ENCODE measurements at regions of chr16 and their contacts with region 1.

Region 1: GRCh38 chr16:31128711-31129567 is 6.6 kb downstream of the PRSS8 start:
- DNase-seq: peak in 6 of 35 experiments; percentile 16 to 59 (median 28)
- ATAC-seq: peak in 2 of 4 experiments; percentile 12 to 35
- H3K4me3 ChIP-seq: no peak overlapping the region
- H3K4me3 Mint-ChIP-seq: no peak overlapping the region
- H3K27ac ChIP-seq: no peak overlapping the region
- H3K27ac Mint-ChIP-seq: peak overlapping the region in 1 of 2 donors; percentile 49
- H3K4me1 ChIP-seq: peaks cover 0 to 3% of the 10 kb centered on the region in 2 experiments
- H3K4me1 Mint-ChIP-seq: peaks cover 2 to 9% (median 7%) of the 10 kb centered on the region in 3 donors
- H3K27me3 ChIP-seq: no peaks in the 10 kb centered on the region
- H3K27me3 Mint-ChIP-seq: no peaks in the 10 kb centered on the region

Region 2: GRCh38 chr16:29825145-29826044 is 1303.5 kb before region 1 on chr16:
- CTCF ChIA-PET with region 1: no interaction called
- POLR2A ChIA-PET with region 1: interaction called in 1 of 2 experiments, 12 read pairs
- DNase-seq: peak in 4 of 35 experiments; percentile 22 to 55 (median 30)
- ATAC-seq: peak in 3 of 4 experiments; percentile 22 to 25 (median 24)
- H3K4me3 ChIP-seq: no peak overlapping the region
- H3K4me3 Mint-ChIP-seq: peak overlapping the region; percentile 46 to 79 (median 47)
- H3K27ac ChIP-seq: peak overlapping the region; percentile 46
- H3K27ac Mint-ChIP-seq: peak overlapping the region; percentile 96
- H3K4me1 ChIP-seq: peaks cover 45 to 97% of the 10 kb centered on the region in 2 experiments
- H3K4me1 Mint-ChIP-seq: peaks cover 71 to 94% (median 85%) of the 10 kb centered on the region in 3 donors
- H3K27me3 ChIP-seq: no peaks in the 10 kb centered on the region
- H3K27me3 Mint-ChIP-seq: no peaks in the 10 kb centered on the region

Region 3: GRCh38 chr16:30966033-30966619 is 162.8 kb before region 1 on chr16:
- CTCF ChIA-PET with region 1: no interaction called
- POLR2A ChIA-PET with region 1: interaction called in 1 of 2 experiments, 13 read pairs
- DNase-seq: no peak
- ATAC-seq: no peak
- H3K4me3 ChIP-seq: no peak overlapping the region
- H3K4me3 Mint-ChIP-seq: no peak overlapping the region
- H3K27ac ChIP-seq: no peak overlapping the region
- H3K27ac Mint-ChIP-seq: no peak overlapping the region
- H3K4me1 ChIP-seq: peaks cover 0 to 6% of the 10 kb centered on the region in 2 experiments
- H3K4me1 Mint-ChIP-seq: peaks cover 0 to 8% (median 4%) of the 10 kb centered on the region in 3 donors
- H3K27me3 ChIP-seq: no peaks in the 10 kb centered on the region
- H3K27me3 Mint-ChIP-seq: no peaks in the 10 kb centered on the region